ENCODE measurements at regions of chr15 and their contacts with region 1.

Region 1: DNA sequence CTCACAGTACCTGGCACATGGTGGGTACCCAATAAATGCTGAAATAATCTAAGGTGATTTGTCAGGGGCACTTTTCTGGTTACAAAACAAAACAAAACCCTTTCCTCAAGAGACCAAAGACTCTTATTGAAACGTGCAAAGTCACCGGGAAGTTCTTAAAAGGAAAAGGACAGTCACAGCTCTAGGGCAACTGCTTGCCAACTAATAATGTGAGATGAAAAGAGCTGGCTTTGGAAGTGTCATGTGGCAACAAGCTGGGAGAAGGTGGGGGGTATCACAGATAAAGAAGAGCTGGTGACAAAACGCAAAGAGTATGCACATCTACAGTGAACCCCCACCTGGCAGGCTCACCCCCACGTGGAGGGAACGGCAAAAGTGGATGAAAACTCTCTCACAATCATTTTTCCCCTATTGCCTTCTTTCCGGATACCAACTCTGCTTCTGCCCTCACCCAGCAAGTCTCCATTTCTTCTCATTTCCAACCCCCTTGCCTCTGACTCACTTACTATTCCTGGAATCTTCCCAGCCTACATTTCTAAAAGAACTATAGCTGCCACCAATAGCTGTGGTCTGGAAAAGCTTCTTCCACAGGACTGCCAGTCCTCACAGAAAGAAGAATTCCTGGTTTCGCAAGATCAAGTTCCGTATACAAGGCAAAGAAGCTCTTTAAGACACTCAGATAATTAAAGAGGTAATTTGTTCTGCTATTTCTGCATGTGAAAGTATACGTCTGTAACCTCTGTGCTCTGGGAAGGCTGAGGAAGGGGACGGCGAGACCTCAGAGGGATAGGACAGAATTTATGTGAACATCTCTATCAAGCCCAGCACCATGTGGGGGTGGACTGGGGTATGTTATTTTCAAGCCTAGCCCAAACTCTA is 21.8 kb upstream of the ANPEP start:
- DNase-seq: peak; percentile 60 to 96
- H3K4me3 ChIP-seq: peak overlapping the region; percentile 9; the same call in 1 of the 2 replicates
- H3K27ac ChIP-seq: peak overlapping the region; percentile 97
- H3K4me1 ChIP-seq: peaks cover 48% of the 10 kb centered on the region
- H3K27me3 ChIP-seq: no peaks in the 10 kb centered on the region
- CTCF ChIP-seq: no peak

Region 2: DNA sequence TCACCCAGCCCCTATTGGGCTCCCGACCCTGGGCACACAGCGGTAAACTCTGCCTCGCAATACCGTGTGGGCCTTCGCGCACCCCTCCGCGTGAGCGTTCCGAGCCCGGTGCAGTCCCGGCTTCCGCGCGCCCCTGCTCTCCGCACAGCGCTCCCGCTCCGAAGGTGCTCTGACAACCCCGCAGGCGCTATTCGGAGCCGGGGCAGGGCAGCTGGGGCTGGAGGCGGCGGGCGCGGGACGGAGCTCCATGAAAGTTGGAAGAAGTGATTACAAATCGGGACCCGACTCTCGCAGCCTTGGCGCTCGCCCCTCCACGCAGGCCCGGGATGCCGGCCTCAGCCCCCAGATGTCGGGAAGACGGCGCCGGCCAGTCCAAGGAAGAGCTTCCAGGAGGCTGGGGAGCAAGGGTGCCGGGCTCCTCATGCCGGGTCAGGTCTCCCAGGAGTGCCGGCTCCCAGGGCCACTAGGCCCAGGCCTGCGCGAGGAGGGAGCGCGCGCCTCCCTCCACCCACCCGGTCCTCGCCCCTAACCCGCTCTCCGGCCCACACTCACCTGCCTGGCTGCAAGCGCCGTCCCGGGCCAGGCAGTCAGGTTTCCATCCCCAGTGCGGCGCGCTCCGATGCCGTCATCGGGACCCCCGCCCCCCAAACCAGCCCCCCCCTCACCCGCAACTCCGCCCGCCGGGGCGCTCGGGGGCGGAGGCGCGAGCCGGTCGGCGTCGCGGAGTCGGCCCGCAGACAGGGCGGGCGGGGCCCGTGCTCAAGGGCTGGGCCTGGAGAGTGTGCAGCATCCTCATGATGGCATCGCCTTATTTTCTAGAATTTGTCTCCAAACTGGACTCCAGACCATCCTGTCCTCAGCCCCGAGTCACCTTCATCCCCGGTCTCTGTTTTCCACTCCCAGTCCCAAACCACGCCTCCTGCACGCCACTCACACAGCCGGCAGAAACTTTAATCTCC is 181.4 kb before region 1 on chr15 and contains the start of gene KIF7:
- CTCF ChIA-PET with region 1: no interaction called
- POLR2A ChIA-PET with region 1: no interaction called
- intact Hi-C with region 1: no loop called
- DNase-seq: peak; percentile 39 to 44
- H3K4me3 ChIP-seq: peak within 1 kb of the TSS; percentile 96
- H3K27ac ChIP-seq: peak within 1 kb of the TSS; percentile 12; the same call in 1 of the 2 replicates
- H3K4me1 ChIP-seq: peaks cover 9% of the 10 kb centered on the region
- H3K27me3 ChIP-seq: no peaks in the 10 kb centered on the region
- CTCF ChIP-seq: no peak
- total RNA-seq, gene KIF7: 13.3 and 15.7 TPM in 2 replicates

Region 3: GRCh38 chr15:89781891-89782618 is 54.4 kb before region 1 on chr15:
- CTCF ChIA-PET with region 1: interaction called, 5 read pairs
- POLR2A ChIA-PET with region 1: interaction called, 4 read pairs
- intact Hi-C with region 1: loop called (anchors 1 kb)
- DNase-seq: peak; percentile 91 to 96
- H3K4me3 ChIP-seq: no peak overlapping the region
- H3K27ac ChIP-seq: peak overlapping the region; percentile 96
- H3K4me1 ChIP-seq: peaks cover 76% of the 10 kb centered on the region
- H3K27me3 ChIP-seq: no peaks in the 10 kb centered on the region
- CTCF ChIP-seq: no peak

Region 4: GRCh38 chr15:89820666-89821611 is 15.6 kb before region 1 on chr15:
- CTCF ChIA-PET with region 1: interaction called, 3 read pairs
- POLR2A ChIA-PET with region 1: interaction called, 12 read pairs
- intact Hi-C with region 1: no loop called
- DNase-seq: peak in 1 of 2 experiments; percentile 88
- H3K4me3 ChIP-seq: peak overlapping the region; percentile 31; the same call in 1 of the 2 replicates
- H3K27ac ChIP-seq: peak overlapping the region; percentile 94
- H3K4me1 ChIP-seq: peaks cover 75% of the 10 kb centered on the region
- H3K27me3 ChIP-seq: no peaks in the 10 kb centered on the region
- CTCF ChIP-seq: no peak

Measured in PC-9 (cell line).